Right lobe of liver (tissue), 6 donors: ENCODE measurements at regions of chr10 and their contacts with region 1.

Region 1: GRCh38 chr10:79374312-79375191 is 27.3 kb downstream of the PPIF start:
- DNase-seq: peak; percentile 80 to 84 (median 83)
- ATAC-seq: peak; percentile 75 to 82 (median 77)
- H3K4me3 ChIP-seq: no peak overlapping the region
- H3K27ac ChIP-seq: no peak overlapping the region
- H3K4me1 ChIP-seq: peaks cover 0 to 8% (median 0%) of the 10 kb centered on the region in 4 donors
- H3K27me3 ChIP-seq: no peaks in the 10 kb centered on the region
- CTCF ChIP-seq: peak; percentile 95 to 99 (median 98)
- POLR2A ChIP-seq: no peak

Region 2: GRCh38 chr10:79162861-79163665 is 211.5 kb before region 1 on chr10:
- intact Hi-C with region 1: no loop called
- DNase-seq: peak in 1 of 3 donors; percentile 70
- ATAC-seq: peak; percentile 5 to 47 (median 32)
- H3K4me3 ChIP-seq: no peak overlapping the region
- H3K27ac ChIP-seq: no peak overlapping the region
- H3K4me1 ChIP-seq: peaks cover 2 to 27% (median 11%) of the 10 kb centered on the region in 4 donors
- H3K27me3 ChIP-seq: no peaks in the 10 kb centered on the region
- CTCF ChIP-seq: no peak
- POLR2A ChIP-seq: no peak

Region 3: DNA sequence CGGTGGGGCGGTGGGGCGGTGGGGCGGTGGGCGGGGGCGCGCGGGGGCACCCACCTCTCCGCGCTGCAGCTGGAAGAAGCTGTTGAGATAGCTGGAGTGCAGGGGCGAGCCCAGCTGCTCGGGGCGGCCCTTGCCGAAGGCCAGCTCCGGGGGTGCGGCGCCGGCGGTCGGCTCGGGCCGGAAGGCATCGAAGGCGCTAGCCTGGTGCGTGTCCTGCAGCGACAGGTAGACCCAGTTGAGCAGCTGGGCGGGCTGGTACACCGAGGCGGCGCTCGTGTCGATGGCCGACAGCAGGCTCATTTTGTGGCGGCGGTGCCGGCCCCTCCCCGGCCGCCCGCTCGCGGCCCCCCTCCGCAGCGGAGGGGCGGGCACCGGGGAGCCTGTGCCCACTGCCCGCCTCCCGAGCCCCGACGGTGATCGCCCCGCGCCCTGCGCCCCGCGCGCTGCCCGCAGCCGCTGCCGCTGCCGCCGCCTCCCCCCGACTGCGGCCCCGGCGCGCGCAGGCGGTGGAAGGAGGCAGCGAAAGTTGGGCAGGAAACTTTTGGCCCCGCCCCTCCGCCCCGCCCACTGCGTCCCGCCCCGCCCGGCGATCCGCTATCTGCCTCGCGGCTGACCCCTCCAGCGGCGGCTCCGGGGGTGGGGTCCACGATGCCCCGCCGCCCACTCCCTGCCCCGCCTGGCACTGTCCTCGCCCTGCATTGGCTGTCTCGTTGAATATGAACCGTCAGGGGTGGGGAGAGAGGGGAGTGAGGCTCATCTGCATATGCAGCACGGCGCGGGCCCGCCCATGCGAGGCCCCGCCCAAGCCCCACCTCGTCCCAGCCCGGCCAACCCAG is 70.8 kb after region 1 on chr10 and contains the start of gene ZCCHC24:
- intact Hi-C with region 1: no loop called
- DNase-seq: peak; percentile 99 to 100 (median 99)
- ATAC-seq: peak; percentile 87 to 95 (median 88)
- H3K4me3 ChIP-seq: peak within 1 kb of the TSS; percentile 90 to 93 (median 92)
- H3K27ac ChIP-seq: peak within 1 kb of the TSS; percentile 79 to 87 (median 80)
- H3K4me1 ChIP-seq: peaks cover 0 to 40% (median 10%) of the 10 kb centered on the region in 4 donors
- H3K27me3 ChIP-seq: no peaks in the 10 kb centered on the region
- CTCF ChIP-seq: no peak
- POLR2A ChIP-seq: peak; percentile 97
- total RNA-seq, gene ZCCHC24: 19.8 to 33.6 (median 22.7) TPM

Region 4: DNA sequence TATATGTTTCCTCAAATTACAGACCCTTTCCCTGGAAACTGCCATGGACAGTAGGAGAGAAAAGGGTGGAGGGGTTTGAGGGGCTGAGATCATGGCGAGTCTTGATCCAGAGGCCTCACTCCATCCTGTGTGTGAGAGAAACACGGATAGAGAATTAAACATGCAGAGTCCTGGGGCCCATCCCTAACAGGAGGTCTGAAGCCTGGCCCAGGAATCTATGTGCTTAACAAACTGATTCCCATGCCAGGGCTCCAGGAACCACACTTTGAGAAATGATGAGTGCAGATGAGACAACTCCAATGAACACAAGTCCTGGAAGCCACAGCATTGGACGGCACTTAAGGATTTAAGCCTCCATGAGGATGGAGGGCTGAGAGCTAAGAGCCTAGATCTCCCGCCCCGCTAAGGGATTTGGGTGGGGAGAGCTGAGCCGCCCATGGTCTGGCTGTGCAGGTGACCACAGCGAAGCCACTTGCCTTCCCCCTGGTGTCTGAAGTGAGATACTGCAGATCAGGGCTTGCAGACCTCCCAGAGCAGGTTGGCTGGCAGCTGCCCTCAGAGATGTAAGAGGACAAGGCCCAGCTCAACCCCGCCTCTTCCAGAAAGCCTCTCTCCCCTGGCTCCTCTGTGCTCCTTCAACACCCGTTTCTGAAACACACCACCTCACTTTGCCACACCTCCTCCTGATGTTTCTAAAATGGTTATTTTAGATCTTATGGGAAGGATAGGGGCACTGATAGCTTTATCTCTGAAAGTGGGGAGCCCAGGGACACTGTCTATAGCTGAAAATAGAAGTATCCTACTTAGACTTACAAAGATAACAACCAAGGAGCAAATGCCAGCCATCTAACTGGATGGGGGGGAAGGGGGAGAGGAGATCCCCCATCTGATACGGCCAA is 113.0 kb after region 1 on chr10:
- intact Hi-C with region 1: loop called (anchors 5 to 10 kb)
- DNase-seq: peak; percentile 69 to 72 (median 72)
- ATAC-seq: peak; percentile 95
- H3K4me3 ChIP-seq: no peak overlapping the region
- H3K27ac ChIP-seq: no peak overlapping the region
- H3K4me1 ChIP-seq: no peaks in the 10 kb centered on the region
- H3K27me3 ChIP-seq: no peaks in the 10 kb centered on the region
- CTCF ChIP-seq: peak; percentile 73 to 86 (median 80)
- POLR2A ChIP-seq: no peak